K562 (cell line): ENCODE measurements at regions of chr21 and their contacts with region 1.

Region 1: GRCh38 chr21:33924079-33924765 is 8.6 kb upstream of the ATP5PO start:
- DNase-seq: peak; percentile 83 to 92 (median 84)
- ATAC-seq: peak; percentile 100
- H3K4me3 ChIP-seq: no peak overlapping the region
- H3K27ac ChIP-seq: no peak overlapping the region
- H3K4me1 ChIP-seq: peaks cover 0 to 3% of the 10 kb centered on the region in 2 experiments; a peak in 1 of 5 replicates
- H3K27me3 ChIP-seq: peaks cover 0 to 6% of the 10 kb centered on the region in 2 experiments; a peak in 1 of 5 replicates
- CTCF ChIP-seq: peak; percentile 94 to 98 (median 94)
- EP300 ChIP-seq: peak; percentile 49; the same call in 1 of the 2 replicates
- POLR2A ChIP-seq: no peak
- RAD21 ChIP-seq: peak; percentile 99 to 100

Region 2: DNA sequence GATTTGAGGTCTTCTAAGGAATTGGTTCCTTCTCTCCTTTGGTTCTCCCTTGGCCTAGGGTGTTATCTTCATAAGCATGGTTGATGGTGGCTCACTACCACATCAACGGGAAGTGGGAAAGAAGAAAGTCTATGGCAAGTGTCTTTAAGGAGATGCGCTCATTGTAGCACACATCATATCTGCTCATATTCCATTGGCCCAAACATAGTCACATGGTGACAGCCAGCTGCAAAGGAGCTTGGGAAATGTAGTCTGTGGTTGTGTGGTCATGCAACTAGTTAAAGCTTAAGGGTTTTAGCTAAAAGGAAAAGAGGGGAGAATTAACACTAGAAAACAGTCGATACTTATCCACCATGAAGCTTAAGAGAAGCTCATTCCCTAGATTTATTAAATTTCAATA is 137.8 kb after region 1 on chr21:
- CTCF ChIA-PET with region 1: no interaction called
- POLR2A ChIA-PET with region 1: no interaction called
- in situ Hi-C with region 1: loop called (anchors 10 kb)
- intact Hi-C with region 1: no loop called
- DNase-seq: peak; percentile 62 to 79 (median 77)
- ATAC-seq: peak; percentile 99
- H3K4me3 ChIP-seq: no peak overlapping the region
- H3K27ac ChIP-seq: no peak overlapping the region
- H3K4me1 ChIP-seq: no peaks in the 10 kb centered on the region; a peak in 1 of 5 replicates
- H3K27me3 ChIP-seq: peaks cover 5 to 31% of the 10 kb centered on the region in 2 experiments; a peak in 3 of 5 replicates
- CTCF ChIP-seq: no peak
- EP300 ChIP-seq: no peak
- POLR2A ChIP-seq: no peak
- RAD21 ChIP-seq: no peak

Region 3: DNA sequence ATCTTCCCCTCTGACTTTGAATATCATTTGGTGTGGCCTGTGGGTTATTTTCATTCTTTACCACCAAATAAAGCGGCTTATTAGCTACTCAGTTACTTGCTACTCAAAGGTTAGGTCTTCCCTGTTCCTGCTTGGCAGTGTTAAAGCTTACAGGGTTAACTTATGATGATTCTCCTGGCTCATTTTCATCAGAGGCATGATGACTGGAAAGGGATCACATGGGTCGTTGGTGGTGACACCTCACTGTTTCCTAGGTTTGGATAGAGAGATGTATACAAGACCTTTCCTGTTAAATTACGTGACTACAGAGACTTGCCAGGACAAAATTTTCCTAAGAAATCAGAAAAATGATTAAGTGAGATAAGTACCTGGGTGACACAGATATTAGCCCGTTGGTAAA is 176.6 kb after region 1 on chr21:
- CTCF ChIA-PET with region 1: no interaction called
- POLR2A ChIA-PET with region 1: interaction called, 4 read pairs
- in situ Hi-C with region 1: loop called (anchors 10 kb)
- intact Hi-C with region 1: no loop called
- DNase-seq: no peak
- ATAC-seq: no peak
- H3K4me3 ChIP-seq: no peak overlapping the region
- H3K27ac ChIP-seq: no peak overlapping the region
- H3K4me1 ChIP-seq: peaks cover 0 to 2% of the 10 kb centered on the region in 2 experiments; a peak in 2 of 5 replicates
- H3K27me3 ChIP-seq: no peaks in the 10 kb centered on the region
- CTCF ChIP-seq: no peak
- EP300 ChIP-seq: no peak
- POLR2A ChIP-seq: no peak
- RAD21 ChIP-seq: no peak

Region 4: DNA sequence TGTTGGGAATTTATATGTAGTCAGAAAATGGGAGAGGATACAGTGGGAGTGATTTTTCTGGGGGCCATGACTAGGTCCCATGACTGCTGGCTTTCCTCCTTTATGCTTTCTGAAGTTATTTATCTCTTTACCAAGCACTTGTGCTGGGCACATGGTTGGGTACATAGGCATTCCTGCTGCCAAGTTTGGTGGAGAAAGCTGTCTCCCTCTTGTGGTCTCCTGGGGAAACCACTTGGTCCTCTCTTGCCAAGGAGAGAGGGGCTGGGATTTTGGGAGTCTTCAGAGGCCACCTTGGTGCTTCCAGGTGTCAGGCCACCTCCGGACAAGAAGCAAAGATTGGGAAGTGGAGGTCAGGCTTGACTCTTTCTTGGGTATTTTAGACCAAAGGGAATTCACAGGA is 319.3 kb after region 1 on chr21:
- CTCF ChIA-PET with region 1: interaction called, 11 read pairs
- POLR2A ChIA-PET with region 1: no interaction called
- in situ Hi-C with region 1: loop called (anchors 10 kb)
- intact Hi-C with region 1: loop called (anchors 5 kb)
- DNase-seq: peak in 2 of 4 experiments; percentile 35 to 36
- ATAC-seq: peak; percentile 54; the same call in 2 of the 3 replicates
- H3K4me3 ChIP-seq: no peak overlapping the region
- H3K27ac ChIP-seq: no peak overlapping the region
- H3K4me1 ChIP-seq: no peaks in the 10 kb centered on the region
- H3K27me3 ChIP-seq: peaks cover under 1 to 19% of the 10 kb centered on the region in 2 experiments; a peak in 2 of 5 replicates
- CTCF ChIP-seq: peak; percentile 58 to 62 (median 60)
- EP300 ChIP-seq: no peak
- POLR2A ChIP-seq: no peak
- RAD21 ChIP-seq: peak; percentile 43 to 74

Region 5: GRCh38 chr21:34351786-34352241 is 427.6 kb after region 1 on chr21:
- CTCF ChIA-PET with region 1: interaction called, 36 read pairs
- POLR2A ChIA-PET with region 1: interaction called, 21 read pairs
- in situ Hi-C with region 1: loop called (anchors 5 kb)
- intact Hi-C with region 1: loop called (anchors 1 kb)
- DNase-seq: peak; percentile 59 to 72 (median 64)
- ATAC-seq: peak; percentile 90
- H3K4me3 ChIP-seq: no peak overlapping the region
- H3K27ac ChIP-seq: no peak overlapping the region
- H3K4me1 ChIP-seq: no peaks in the 10 kb centered on the region
- H3K27me3 ChIP-seq: peaks cover 19 to 25% of the 10 kb centered on the region in 2 experiments
- CTCF ChIP-seq: peak; percentile 77 to 82 (median 80)
- EP300 ChIP-seq: no peak
- POLR2A ChIP-seq: no peak
- RAD21 ChIP-seq: peak; percentile 58 to 90